ENCODE measurements at regions of chr20 and their contacts with region 1.

Region 1: DNA sequence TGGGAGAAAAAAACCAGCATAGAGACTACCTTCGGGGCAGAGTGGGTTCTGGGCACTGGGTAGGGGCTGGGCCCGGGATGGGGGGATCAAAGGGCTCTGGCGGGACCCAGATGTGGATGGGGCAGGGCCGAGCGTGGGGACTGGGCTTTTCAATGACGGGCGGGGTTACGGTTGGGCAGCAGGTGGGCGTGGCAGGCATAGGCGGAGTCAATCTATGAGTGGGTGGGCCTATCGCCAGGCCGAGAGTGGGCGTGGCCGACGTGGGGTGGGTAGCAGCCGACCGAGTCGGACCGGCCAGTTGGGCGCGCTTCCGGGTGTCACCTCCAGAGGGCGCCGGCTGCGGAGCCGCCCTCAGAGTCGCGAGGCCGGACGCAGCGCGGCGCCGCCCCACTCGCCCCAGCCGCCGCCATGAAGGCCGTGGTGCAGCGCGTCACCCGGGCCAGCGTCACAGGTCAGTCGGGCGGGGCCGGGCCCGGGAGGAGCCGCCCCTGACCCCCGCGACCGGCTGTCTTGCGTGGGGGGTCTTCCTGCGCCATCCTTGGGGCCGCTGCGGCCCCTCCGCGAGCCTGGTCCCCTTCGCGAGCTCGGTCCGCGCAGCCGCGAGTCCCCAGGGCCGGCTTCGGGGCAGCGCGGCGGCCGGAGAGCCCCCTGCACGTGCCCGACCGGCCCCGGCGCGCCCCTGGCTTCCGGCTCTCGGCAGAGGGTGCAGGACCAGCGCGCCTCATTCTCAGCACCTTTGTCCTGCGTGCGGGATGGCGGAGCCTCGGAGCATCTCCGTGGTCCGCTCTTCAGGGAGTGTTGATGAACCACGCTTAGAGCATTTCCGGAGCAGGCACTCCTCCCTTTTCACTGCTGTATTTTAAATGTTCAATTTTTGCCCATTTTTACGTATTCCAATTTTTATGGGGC is at the start of gene DTD1:
- DNase-seq: peak; percentile 79
- H3K4me3 ChIP-seq: peak within 1 kb of the TSS; percentile 77 to 98 (median 95)
- H3K27ac ChIP-seq: peak within 1 kb of the TSS; percentile 67
- H3K4me1 ChIP-seq: peaks cover 9% of the 10 kb centered on the region
- H3K27me3 ChIP-seq: no peaks in the 10 kb centered on the region
- CTCF ChIP-seq: peak; percentile 44 to 62
- total RNA-seq, gene DTD1: 58.7 to 83.2 TPM

Region 2: DNA sequence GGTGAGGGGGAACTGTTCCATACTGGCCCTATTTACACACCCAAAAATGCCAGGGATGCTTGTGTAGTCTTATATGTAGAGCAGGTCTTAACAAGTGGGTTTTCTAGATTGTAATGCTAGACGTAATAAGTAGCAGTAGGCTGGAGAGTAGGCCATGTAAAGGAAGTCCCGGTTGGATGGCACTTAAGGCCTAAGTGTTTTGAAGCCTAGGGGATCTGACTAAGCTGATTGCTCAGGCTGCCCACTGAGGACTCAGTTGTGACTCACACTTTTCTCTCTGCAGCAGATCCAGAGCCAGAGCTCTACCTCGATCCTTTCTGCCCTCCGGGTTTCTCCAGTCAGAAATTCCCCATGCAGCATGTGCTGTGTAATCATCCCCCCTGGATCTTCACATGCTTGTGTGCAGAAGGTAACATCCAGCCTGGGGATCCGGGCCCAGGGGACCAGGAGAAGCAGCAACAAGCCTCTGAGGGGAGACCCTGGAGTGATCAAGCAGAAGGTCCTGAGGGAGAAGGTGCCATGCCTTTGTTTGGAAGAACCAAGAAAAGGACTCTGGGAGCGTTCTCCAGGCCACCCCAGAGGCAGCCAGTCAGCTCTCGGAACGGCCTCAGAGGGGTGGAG is 273.0 kb before region 1 on chr20:
- CTCF ChIA-PET with region 1: no interaction called
- dilution Hi-C with region 1: no loop called
- in situ Hi-C with region 1: no loop called
- intact Hi-C with region 1: loop called (anchors 5 kb)
- DNase-seq: peak; percentile 99
- H3K4me3 ChIP-seq: no peak overlapping the region
- H3K27ac ChIP-seq: peak overlapping the region; percentile 83
- H3K4me1 ChIP-seq: peaks cover 35% of the 10 kb centered on the region
- H3K27me3 ChIP-seq: no peaks in the 10 kb centered on the region
- CTCF ChIP-seq: no peak

Region 3: GRCh38 chr20:18566892-18567742 is 20.8 kb before region 1 on chr20 and contains the start of gene SMIM26:
- CTCF ChIA-PET with region 1: no interaction called
- dilution Hi-C with region 1: no loop called
- in situ Hi-C with region 1: no loop called
- intact Hi-C with region 1: loop called (anchors 1 kb)
- DNase-seq: peak; percentile 93
- H3K4me3 ChIP-seq: peak within 1 kb of the TSS; percentile 63 to 90 (median 66)
- H3K27ac ChIP-seq: peak within 1 kb of the TSS; percentile 73
- H3K4me1 ChIP-seq: peaks cover 7% of the 10 kb centered on the region
- H3K27me3 ChIP-seq: no peaks in the 10 kb centered on the region
- CTCF ChIP-seq: no peak
- total RNA-seq, gene SMIM26: 58.5 to 72.9 TPM